RWPE1 (cell line): ENCODE measurements at regions of chr19 and their contacts with region 1.

Region 1: DNA sequence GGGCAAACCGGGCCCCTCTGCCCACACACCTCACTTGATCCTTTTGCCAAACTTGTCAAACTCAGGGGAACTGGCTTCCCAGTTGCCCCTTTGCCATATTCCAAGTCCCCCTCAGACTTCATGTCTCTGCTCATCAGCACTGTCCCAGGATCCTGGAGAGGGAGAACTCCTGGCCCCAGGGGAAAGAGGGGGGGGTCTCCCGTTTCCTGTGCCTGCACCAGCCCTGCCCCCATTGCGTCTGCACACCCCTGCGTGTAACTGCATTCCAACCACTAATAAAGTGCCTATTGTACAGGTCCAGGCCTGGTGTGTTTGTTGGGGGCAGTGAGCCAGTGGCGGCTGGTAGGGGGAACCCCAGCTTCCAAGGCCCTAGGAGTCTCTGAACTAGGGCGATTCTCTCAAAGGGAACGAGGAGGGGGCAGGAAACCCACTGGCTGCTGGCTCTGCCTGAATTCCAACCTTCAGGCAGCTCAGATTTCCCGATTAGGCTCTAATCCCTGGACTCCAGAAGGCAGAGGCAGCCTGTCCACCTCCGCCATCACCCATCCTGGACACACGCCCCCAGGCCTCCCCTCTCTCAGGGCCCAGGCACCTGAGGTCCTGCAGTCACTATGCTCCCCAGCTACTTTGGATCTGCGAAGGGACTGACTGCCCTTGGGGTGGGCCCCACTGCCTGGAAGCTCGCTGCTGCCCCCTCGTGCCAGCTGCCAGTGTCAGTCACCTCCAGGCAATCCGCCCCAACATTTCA is 9.7 kb upstream of the ILF3 start:
- DNase-seq: peak; percentile 90
- H3K27ac ChIP-seq: peak overlapping the region; percentile 76
- CTCF ChIP-seq: peak; percentile 90

Region 2: GRCh38 chr19:10580979-10581631 is 63.3 kb before region 1 on chr19:
- CTCF ChIA-PET with region 1: interaction called, 81 read pairs
- POLR2A ChIA-PET with region 1: interaction called, 4 read pairs
- DNase-seq: peak; percentile 86
- H3K27ac ChIP-seq: no peak overlapping the region
- CTCF ChIP-seq: peak; percentile 97

Region 3: DNA sequence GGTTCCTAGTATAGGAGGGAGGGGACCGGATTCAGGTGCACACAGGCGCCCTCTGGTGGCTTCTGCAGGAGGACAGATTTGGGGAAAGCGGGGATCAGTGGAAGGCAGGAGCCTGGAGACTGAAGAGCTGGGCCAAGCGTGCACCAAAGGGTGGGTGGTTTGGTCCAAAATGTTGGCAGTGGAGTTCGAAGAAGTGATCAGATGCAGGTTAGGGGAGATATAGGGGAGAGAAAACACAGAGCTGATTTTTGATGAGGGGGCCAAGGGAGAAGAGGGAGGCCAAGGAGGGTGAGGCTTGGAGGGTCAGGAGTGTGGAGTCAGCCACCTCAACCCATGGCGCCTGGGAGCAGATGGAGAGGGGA is 220.1 kb after region 1 on chr19:
- CTCF ChIA-PET with region 1: no interaction called
- POLR2A ChIA-PET with region 1: no interaction called
- DNase-seq: peak; percentile 92
- H3K27ac ChIP-seq: peak overlapping the region; percentile 45
- CTCF ChIP-seq: peak; percentile 93